ENCODE measurements at regions of chr12 and their contacts with region 1.

Region 1: DNA sequence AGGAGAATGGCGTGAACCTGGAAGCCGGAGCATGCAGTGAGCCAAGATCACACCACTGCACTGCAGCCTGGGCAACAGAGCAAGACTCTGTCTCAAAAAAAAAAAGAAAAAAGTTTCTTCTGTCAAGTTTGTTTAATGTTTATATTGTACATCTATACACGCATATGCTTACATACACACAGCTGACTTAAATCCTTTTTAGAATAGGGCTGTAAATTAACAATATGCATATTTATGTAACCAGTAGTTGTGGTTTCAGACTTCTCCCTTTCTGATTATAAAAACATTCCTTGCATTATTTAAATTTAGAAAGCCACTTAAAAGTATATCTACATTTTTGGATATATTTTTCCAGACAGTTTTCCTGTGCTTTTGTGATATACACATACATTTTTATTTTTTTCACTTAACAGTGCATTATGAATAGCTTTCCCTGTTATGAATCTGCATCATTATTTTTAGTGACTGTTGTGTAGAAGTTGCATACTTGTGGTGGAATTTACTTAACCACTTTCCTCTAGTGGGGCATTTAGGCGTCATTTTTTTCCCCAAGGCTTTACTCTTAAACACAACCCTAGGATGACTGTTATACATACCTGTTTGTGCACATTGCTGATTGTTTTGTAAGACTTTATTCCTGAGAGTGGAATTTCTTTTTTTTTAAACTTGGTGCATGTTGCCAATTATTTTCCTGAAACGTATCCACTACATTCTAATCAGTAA is 29.4 kb downstream of the POLR3B start:
- DNase-seq: peak; percentile 76
- H3K4me3 ChIP-seq: no peak overlapping the region
- H3K27ac ChIP-seq: no peak overlapping the region
- H3K4me1 ChIP-seq: no peaks in the 10 kb centered on the region
- H3K27me3 ChIP-seq: no peaks in the 10 kb centered on the region
- CTCF ChIP-seq: no peak

Region 2: DNA sequence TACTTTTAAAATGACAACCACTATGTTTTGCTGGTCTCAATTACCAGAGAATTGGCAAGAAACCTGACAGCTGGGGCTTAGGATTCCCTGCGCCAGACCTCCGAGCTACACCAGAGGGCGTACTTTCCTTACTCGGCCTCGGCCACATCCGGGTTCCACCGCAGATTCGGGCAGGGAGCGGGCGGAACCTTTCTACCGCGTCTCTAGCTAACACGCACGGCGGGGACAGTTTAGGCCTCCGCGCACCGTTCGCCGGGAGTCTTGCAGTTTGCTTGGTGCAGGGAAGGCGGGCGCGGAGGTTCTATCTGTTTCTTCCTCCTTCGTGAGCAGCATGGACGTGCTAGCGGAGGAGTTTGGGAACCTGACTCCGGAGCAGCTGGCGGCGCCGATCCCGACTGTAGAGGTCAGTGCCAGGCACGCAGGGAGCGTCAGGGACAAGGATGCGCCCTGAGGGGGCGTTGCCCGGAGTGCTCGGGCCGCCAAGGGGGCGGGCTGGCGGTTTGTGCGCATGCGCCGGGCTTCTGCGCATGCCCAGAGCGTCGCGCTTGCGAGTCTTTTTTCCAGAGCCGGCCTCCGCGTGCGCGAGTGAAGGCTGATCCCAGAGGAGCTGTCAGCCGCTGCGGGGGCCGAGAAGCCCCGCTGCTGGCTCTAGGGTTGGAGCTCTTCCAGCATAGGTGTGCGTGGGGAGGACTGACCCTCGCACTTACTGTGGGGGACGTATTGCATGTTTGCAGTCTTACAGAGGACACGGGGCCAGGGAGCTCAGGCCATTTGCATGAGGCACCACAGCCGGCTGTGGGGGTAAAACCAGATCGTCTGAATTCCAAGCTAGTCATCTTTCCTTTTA is 29.2 kb before region 1 on chr12 and contains the start of gene POLR3B:
- CTCF ChIA-PET with region 1: no interaction called
- dilution Hi-C with region 1: no loop called
- in situ Hi-C with region 1: no loop called
- intact Hi-C with region 1: loop called (anchors 1 kb)
- DNase-seq: peak; percentile 93
- H3K4me3 ChIP-seq: peak within 1 kb of the TSS; percentile 75 to 90 (median 81)
- H3K27ac ChIP-seq: peak within 1 kb of the TSS; percentile 69
- H3K4me1 ChIP-seq: peaks cover 10% of the 10 kb centered on the region
- H3K27me3 ChIP-seq: no peaks in the 10 kb centered on the region
- CTCF ChIP-seq: peak; percentile 81 to 92
- total RNA-seq, gene POLR3B: 13.3 TPM

Region 3: GRCh38 chr12:106774005-106774807 is 387.2 kb after region 1 on chr12 and contains the start of gene RIC8B:
- CTCF ChIA-PET with region 1: no interaction called
- dilution Hi-C with region 1: no loop called
- in situ Hi-C with region 1: no loop called
- intact Hi-C with region 1: loop called (anchors 10 kb)
- DNase-seq: peak; percentile 99
- H3K4me3 ChIP-seq: peak within 1 kb of the TSS; percentile 76 to 93 (median 84)
- H3K27ac ChIP-seq: peak within 1 kb of the TSS; percentile 95
- H3K4me1 ChIP-seq: peaks cover 7% of the 10 kb centered on the region
- H3K27me3 ChIP-seq: no peaks in the 10 kb centered on the region
- CTCF ChIP-seq: no peak
- total RNA-seq, gene RIC8B: 9.2 to 9.3 TPM

Region 4: GRCh38 chr12:106801830-106802533 is 415.0 kb after region 1 on chr12:
- CTCF ChIA-PET with region 1: no interaction called
- dilution Hi-C with region 1: no loop called
- in situ Hi-C with region 1: no loop called
- intact Hi-C with region 1: no loop called
- DNase-seq: no peak
- H3K4me3 ChIP-seq: no peak overlapping the region
- H3K27ac ChIP-seq: no peak overlapping the region
- H3K4me1 ChIP-seq: no peaks in the 10 kb centered on the region
- H3K27me3 ChIP-seq: no peaks in the 10 kb centered on the region
- CTCF ChIP-seq: no peak

Region 5: DNA sequence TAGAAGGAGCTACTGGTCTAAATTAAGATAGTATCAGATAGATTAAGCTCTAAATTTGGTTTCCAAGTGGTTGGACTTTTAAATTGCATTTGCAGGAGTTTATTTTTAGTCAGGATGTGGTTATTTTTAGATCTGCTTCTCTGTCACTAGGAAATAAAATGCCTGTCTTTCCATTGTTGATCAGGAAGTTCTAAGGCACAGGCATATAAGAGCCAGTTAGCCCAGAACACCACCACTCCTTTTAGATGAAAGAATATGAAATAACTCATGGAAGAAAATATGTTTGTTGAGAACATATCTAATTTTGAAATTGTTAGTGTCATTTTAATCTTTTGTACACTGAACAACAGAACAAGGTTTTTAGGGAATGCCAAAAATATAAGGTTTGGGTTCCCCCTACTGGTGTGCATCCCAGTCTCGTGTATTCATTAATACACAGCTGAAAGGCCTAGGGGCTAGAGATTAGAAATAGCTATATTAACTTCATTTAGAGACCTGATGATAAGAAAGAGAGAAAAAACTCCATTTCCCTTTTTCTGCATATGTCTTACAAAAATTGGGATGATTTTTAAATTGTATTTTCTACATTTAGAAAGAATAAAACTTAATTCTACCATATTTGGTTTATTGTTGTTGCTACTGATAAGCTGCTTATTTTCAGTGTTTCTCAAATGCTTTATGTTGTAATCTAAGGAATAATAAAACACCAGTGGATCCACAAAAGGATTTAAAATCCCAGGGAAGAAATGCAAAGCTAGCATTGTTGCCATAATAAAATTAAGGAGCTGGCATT is 454.7 kb after region 1 on chr12:
- CTCF ChIA-PET with region 1: interaction called, 4 read pairs
- dilution Hi-C with region 1: no loop called
- in situ Hi-C with region 1: loop called (anchors 25 kb)
- intact Hi-C with region 1: loop called (anchors 1 kb)
- DNase-seq: peak; percentile 17
- H3K4me3 ChIP-seq: no peak overlapping the region
- H3K27ac ChIP-seq: no peak overlapping the region
- H3K4me1 ChIP-seq: no peaks in the 10 kb centered on the region
- H3K27me3 ChIP-seq: no peaks in the 10 kb centered on the region
- CTCF ChIP-seq: peak; percentile 50 to 60

Region 6: GRCh38 chr12:106919910-106920544 is 533.1 kb after region 1 on chr12:
- CTCF ChIA-PET with region 1: no interaction called
- dilution Hi-C with region 1: no loop called
- in situ Hi-C with region 1: loop called (anchors 10 kb)
- intact Hi-C with region 1: loop called (anchors 1 kb)
- DNase-seq: no peak
- H3K4me3 ChIP-seq: no peak overlapping the region
- H3K27ac ChIP-seq: no peak overlapping the region
- H3K4me1 ChIP-seq: no peaks in the 10 kb centered on the region
- H3K27me3 ChIP-seq: no peaks in the 10 kb centered on the region
- CTCF ChIP-seq: peak; percentile 64 to 69

Region 7: DNA sequence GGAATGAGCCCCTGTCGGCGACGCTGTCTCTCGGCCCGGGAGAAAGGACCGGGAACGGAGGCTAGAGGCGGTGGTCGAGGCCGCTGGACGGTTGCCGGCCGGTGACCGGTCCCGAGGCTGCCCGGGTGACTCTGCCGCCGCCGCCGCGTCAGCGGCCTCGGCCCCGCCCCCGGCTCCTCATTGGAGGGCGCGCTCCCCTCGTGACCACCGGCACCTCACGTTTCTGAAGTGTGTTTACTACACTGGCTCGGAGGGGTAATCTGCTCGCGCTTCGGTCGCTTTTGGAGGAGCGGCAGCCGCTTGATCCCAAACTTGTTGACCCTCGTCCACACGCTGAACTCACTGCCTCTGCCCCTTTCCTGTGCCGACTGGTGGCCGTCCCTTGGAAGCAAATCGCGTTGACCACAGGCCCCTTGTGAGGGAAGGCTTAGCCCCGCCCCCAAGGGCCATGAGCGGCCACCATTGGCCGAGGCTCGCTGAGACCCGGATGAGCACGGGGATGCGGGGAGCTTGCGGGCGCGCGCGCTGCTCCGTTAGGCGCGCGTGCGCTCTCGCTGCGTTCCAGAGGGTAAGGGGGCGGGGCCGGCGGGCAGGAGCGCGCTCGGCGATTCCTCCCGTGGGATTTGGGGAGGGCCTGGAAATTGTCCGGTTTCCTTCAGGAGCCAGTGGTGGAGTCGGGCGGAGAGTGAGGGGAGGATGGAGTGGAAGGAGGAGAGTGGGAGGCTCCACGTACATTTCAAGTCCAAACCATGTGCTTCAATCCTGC is 706.6 kb after region 1 on chr12 and contains the start of gene CRY1:
- CTCF ChIA-PET with region 1: no interaction called
- dilution Hi-C with region 1: no loop called
- in situ Hi-C with region 1: no loop called
- intact Hi-C with region 1: loop called (anchors 10 kb)
- DNase-seq: peak; percentile 94
- H3K4me3 ChIP-seq: peak within 1 kb of the TSS; percentile 59 to 75 (median 65)
- H3K27ac ChIP-seq: peak within 1 kb of the TSS; percentile 94
- H3K4me1 ChIP-seq: peaks cover 24% of the 10 kb centered on the region
- H3K27me3 ChIP-seq: no peaks in the 10 kb centered on the region
- CTCF ChIP-seq: no peak
- total RNA-seq, gene CRY1: 10.0 to 12.3 TPM

Region 8: DNA sequence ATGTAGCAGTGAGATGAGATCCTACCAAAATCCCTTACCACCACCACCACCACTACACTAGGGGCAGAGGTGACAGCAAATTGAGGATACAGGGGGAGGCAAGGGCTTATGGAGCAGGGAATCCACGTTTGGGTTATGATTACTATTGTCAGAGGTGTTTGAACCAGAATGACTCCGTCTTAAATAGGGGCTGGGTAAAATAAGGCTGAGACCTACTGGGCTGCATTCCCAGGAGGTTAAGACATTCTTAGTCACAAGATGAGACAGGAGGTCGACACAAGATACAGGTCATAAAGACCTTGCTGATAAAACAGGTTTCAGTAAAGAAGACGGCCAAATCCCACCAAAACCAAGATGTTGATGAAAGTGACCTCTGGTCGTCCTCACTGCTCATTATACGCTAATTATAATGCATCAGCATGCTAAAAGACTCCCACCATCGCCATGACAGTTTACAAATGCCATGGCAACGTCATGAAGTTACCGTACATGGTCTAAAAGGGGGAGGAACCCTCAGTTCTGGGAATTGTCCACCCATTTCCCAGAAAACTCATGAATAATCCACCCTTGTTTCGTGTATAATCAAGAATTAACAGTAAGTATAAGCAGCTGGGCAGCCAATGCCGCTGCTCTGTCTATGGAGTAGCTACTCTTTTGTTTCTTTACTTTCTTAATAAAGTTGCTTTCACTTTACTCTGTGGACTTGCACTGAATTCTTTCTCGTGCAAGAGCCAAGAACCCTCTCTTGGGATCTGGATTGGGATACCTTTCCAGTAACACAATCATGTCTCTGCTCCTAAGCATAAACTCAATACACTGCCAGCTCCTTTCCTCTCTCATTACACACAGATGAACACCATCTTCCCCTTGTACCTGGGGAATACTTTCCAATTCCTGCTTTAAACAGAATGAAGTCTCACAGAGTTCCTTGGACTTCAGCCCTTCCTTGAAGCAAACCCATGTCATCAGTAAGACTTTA is 723.1 kb after region 1 on chr12:
- CTCF ChIA-PET with region 1: no interaction called
- dilution Hi-C with region 1: no loop called
- in situ Hi-C with region 1: loop called in 1 of 2 experiments (anchors 25 kb)
- intact Hi-C with region 1: no loop called
- DNase-seq: no peak
- H3K4me3 ChIP-seq: no peak overlapping the region
- H3K27ac ChIP-seq: no peak overlapping the region
- H3K4me1 ChIP-seq: no peaks in the 10 kb centered on the region
- H3K27me3 ChIP-seq: peaks cover 2% of the 10 kb centered on the region
- CTCF ChIP-seq: no peak

Measured in mammary epithelial cell (primary cell).